Spleen (tissue), 13 donors: ENCODE measurements at regions of chr10 and their contacts with region 1.

Region 1: GRCh38 chr10:16817125-16818019 is at the start of gene RSU1:
- DNase-seq: peak; percentile 100
- H3K4me3 ChIP-seq: peak within 1 kb of the TSS; percentile 64 to 91 (median 74)
- H3K27ac ChIP-seq: peak within 1 kb of the TSS; percentile 82 to 96 (median 92)
- H3K4me1 ChIP-seq: peaks cover 9 to 60% (median 48%) of the 10 kb centered on the region in 6 donors
- H3K27me3 ChIP-seq: no peaks in the 10 kb centered on the region
- CTCF ChIP-seq: peak in 3 of 11 experiments; percentile 29 to 49 (median 47)
- POLR2A ChIP-seq: peak in 2 of 3 donors; percentile 50 to 83
- total RNA-seq, gene RSU1: 58.4 to 81.7 (median 67.3) TPM

Region 2: DNA sequence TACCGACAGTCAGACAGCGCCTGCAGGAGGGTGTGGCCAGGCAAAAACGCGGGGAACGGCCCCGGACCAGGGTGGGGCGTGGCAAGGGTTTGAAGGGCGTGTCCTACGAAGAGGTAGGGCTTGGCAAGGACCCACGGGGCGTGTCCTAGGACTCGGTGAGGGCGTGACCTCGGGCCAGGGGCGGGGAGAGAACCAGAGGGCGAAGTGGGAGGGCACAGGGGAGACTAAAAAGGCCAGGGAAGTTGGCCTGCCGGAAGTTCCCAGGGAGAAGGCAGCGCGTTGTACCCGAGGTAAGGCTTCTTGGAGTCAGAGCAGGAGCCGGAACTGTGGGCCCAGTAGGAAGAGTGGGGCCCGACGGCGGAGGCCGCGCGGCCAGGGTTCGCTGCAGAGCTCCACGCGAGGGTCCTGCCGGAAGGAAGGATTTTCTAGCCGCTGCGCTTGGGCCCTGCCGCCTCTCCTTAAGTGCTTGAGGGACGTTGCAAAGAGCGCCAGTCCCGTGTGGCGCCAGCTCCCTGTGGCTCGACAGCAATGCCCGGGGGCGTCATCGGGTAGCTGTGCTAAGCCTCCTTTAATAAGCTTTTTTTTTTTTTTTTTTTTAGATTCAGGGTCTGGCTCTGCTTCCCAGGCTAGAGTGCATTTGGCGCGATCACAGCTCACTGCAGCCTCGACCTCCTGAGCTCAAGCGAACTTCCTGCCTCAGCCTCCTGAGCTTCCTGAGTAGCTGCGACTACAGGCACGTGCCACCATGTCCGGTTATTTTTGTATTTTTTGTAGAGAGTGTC is 380.4 kb before region 1 on chr10 and contains the start of gene PTER:
- intact Hi-C with region 1: loop called (anchors 10 kb)
- DNase-seq: peak; percentile 99
- H3K4me3 ChIP-seq: peak within 1 kb of the TSS; percentile 61 to 87 (median 66)
- H3K27ac ChIP-seq: peak within 1 kb of the TSS; percentile 66 to 93 (median 86)
- H3K4me1 ChIP-seq: peaks cover 18 to 59% (median 48%) of the 10 kb centered on the region in 6 donors
- H3K27me3 ChIP-seq: no peaks in the 10 kb centered on the region
- CTCF ChIP-seq: no peak
- POLR2A ChIP-seq: peak in 2 of 3 donors; percentile 30 to 40
- total RNA-seq, gene PTER: 17.5 to 29.3 (median 19.6) TPM